PC-3 (cell line): ENCODE measurements at regions of chr17 and their contacts with region 1.

Region 1: DNA sequence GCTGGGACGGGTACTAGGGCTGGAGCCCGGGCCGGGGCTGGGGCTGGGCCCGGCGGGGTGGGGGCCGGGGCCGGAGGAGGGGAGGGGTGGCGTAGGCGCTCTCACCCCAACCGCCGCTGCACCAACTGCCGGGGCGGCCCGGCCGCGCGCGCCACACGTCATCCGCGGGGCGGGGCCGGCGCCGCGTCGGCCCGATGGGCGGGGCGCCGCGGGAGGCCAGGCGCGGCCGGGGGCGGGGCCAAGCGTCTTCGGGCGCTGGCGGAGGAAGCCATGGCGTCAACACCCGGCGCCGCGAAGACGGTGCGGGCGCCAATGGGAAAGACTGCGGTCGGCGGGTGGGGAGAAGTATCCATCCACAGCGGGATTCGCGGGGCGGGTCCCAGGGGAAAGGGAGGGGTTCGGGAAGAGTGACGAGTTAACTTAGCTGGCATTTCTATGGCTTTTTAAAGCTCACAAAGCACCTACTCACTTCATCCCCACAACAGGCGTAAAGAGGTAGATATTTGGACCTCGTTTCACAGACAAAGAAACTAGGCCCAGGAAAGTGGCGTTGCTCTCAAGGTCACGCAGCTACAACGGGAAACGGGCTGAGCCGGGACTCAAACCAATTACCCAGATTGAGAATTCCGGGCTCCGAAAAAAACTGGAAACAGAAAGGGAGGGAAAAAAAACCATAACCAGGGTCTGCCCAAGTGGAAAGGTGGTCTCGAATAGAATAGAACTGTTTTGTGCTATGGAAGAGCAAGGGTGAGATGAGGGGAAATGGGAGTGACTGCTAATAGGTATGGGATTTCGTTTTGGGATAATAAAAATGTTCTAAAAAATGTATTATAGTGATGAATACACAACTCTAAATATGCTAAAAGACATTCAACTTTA is at the start of gene SPAG9:
- DNase-seq: peak; percentile 99
- ATAC-seq: peak; percentile 71
- H3K4me3 ChIP-seq: peak within 1 kb of the TSS; percentile 98
- H3K27ac ChIP-seq: peak within 1 kb of the TSS; percentile 98
- H3K4me1 ChIP-seq: peaks cover 35% of the 10 kb centered on the region
- H3K27me3 ChIP-seq: no peaks in the 10 kb centered on the region
- CTCF ChIP-seq: no peak
- total RNA-seq, gene SPAG9: 90.5 and 98.1 TPM in 2 replicates

Region 2: GRCh38 chr17:51056813-51057510 is 64.0 kb before region 1 on chr17:
- CTCF ChIA-PET with region 1: interaction called, 4 read pairs
- POLR2A ChIA-PET with region 1: interaction called, 9 read pairs
- intact Hi-C with region 1: loop called (anchors 2 kb)
- DNase-seq: peak; percentile 84
- ATAC-seq: peak; percentile 67
- H3K4me3 ChIP-seq: no peak overlapping the region
- H3K27ac ChIP-seq: peak overlapping the region; percentile 35
- H3K4me1 ChIP-seq: peaks cover 35% of the 10 kb centered on the region
- H3K27me3 ChIP-seq: no peaks in the 10 kb centered on the region
- CTCF ChIP-seq: peak; percentile 90

Region 3: GRCh38 chr17:51085185-51085805 is 35.7 kb before region 1 on chr17:
- CTCF ChIA-PET with region 1: no interaction called
- POLR2A ChIA-PET with region 1: interaction called, 29 read pairs
- intact Hi-C with region 1: loop called (anchors 1 kb)
- DNase-seq: peak; percentile 90
- ATAC-seq: peak; percentile 76
- H3K4me3 ChIP-seq: peak overlapping the region; percentile 56
- H3K27ac ChIP-seq: peak overlapping the region; percentile 95
- H3K4me1 ChIP-seq: peaks cover 33% of the 10 kb centered on the region
- H3K27me3 ChIP-seq: no peaks in the 10 kb centered on the region
- CTCF ChIP-seq: no peak

Region 4: DNA sequence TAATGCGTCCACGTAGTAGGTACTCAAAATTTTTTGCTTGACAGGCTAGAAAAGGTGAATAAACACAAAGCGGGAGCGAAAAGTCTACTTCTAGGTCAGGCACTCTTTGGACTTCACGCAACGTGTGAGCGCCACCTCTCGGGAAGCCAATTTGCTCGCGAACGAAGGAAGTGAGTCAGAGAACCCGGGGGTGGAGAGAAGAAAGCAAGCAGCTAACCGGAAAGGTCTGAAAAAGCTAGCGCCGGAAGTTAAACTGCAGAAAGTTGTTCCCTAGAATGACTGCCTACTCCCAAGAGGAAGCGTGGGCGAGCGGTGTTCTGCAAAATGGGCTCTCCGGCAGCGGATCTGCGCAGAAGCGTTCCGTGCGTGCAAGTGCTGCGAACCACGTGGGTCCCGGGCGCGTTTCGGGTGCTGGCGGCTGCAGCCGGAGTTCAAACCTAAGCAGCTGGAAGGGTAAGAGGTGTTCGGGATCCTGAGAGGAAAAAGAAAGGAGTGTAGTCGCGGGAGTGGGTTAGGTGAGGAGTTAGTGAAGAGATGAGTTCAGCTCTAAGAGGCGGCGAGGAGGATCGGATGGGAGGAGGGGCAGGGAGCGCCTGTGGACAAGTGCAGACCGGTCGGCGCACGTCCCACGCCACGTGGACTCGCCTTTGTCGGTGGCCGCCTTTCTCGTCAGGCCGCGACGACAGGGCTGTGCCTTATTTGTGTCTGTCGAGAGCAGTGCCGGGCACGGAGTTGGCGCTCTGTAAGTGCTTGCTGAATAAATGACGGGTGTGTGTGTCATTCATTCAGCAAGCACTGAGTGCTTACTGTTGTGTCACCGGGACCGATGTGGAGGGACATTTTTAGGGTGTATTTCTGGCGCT is 32.5 kb after region 1 on chr17 and contains the start of gene NME1:
- CTCF ChIA-PET with region 1: interaction called, 29 read pairs
- POLR2A ChIA-PET with region 1: interaction called, 13 read pairs
- intact Hi-C with region 1: loop called (anchors 1 kb)
- DNase-seq: peak; percentile 100
- ATAC-seq: peak; percentile 91
- H3K4me3 ChIP-seq: peak within 1 kb of the TSS; percentile 87
- H3K27ac ChIP-seq: peak within 1 kb of the TSS; percentile 74
- H3K4me1 ChIP-seq: peaks cover 21% of the 10 kb centered on the region
- H3K27me3 ChIP-seq: no peaks in the 10 kb centered on the region
- CTCF ChIP-seq: peak; percentile 98
- total RNA-seq, gene NME1: 538 and 592 TPM in 2 replicates